A673 (cell line): ENCODE measurements at regions of chr10 and their contacts with region 1.

Region 1: GRCh38 chr10:132387764-132388210 is 9.2 kb upstream of the PWWP2B start:
- DNase-seq: peak; percentile 78
- H3K4me3 ChIP-seq: no peak overlapping the region
- H3K27ac ChIP-seq: peak overlapping the region; percentile 51
- H3K4me1 ChIP-seq: peaks cover 15% of the 10 kb centered on the region
- H3K27me3 ChIP-seq: no peaks in the 10 kb centered on the region
- CTCF ChIP-seq: peak; percentile 71

Region 2: DNA sequence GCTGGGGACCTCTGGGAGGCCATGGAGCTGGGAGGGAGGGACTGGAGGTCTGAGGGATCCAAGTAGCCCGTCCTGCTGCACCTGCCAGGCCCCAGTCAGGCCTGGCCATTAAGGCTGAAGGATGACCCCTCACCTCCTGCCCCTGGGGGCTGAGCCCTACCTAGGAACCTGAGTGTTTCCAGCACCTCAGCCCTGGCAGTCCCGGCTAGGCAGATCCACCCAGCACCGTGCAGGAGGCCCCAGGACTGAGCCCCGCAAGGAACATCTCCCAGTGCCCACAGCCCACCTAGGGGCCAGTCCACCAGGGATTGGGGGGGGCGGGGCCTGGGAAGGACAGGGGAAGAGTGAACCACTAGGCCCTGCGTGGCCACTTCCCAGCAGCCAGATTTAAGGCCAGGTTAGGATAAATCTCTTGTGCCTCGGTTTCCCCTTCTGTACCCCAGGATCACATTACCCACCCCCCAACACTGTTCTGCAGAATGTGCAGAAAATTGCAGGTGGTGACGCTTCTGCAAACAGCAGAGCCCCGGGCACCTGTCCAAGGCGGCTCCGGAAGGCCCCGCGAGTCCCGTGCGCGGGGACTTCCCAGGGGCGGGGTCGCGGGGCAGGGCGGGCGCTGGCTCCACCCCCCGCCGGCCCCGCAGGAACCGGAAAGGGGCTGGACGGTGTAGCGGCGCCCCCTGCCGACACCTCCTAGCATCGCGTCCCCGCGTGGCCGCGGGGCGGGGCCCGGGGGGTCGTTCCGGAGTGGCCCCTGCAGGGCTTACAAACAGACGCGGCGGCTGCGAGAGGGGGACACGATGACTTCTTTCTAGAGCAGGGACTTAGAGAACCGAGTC is 65.1 kb after region 1 on chr10:
- CTCF ChIA-PET with region 1: no interaction called
- POLR2A ChIA-PET with region 1: no interaction called
- intact Hi-C with region 1: loop called (anchors 2 kb)
- DNase-seq: peak; percentile 82
- H3K4me3 ChIP-seq: peak overlapping the region; percentile 13
- H3K27ac ChIP-seq: peak overlapping the region; percentile 42
- H3K4me1 ChIP-seq: peaks cover 20% of the 10 kb centered on the region
- H3K27me3 ChIP-seq: no peaks in the 10 kb centered on the region
- CTCF ChIP-seq: peak; percentile 83

Region 3: DNA sequence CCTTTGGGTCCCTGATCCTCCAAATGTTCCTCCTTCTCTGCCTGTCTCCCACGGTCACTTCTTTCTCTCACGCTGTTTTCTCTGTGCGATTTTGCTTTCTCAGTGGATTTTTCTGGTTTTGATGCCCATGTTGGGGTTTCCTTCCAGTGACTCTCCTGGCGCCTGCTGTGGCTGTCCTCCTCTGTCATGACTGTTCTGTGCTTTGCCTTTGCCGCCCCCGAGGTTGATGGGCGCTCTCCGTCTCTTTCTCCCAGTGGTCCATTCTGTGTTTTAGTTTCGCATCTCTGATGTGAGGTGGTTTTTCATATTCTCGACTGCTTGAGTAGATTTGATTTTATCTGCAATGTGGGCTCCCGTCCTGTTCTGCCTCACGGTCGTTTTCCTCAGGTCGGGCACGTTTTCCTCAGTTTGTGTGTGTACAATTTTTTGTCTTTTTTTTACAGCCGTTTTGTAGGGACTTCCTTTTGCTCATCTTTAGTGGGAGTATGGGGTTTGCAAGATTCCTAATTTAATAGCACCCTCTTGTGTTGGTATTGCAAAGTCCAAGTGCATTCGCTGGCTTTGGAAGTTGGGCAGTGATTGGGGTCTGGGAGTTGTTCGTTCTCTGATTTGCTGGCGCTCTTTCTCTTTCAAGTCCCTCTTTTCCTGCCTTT is 249.8 kb after region 1 on chr10:
- CTCF ChIA-PET with region 1: no interaction called
- POLR2A ChIA-PET with region 1: no interaction called
- intact Hi-C with region 1: loop called (anchors 5 kb)
- DNase-seq: peak; percentile 70
- H3K4me3 ChIP-seq: no peak overlapping the region
- H3K27ac ChIP-seq: no peak overlapping the region
- H3K4me1 ChIP-seq: no peaks in the 10 kb centered on the region
- H3K27me3 ChIP-seq: no peaks in the 10 kb centered on the region
- CTCF ChIP-seq: peak; percentile 81